ENCODE measurements at regions of chr1 and their contacts with region 1.

Region 1: GRCh38 chr1:52404116-52404986 is at the starts of genes ORC1 and PRPF38A:
- DNase-seq: peak; percentile 99
- ATAC-seq: peak; percentile 92
- H3K4me3 Mint-ChIP-seq: peak within 1 kb of the TSS; percentile 98
- H3K27ac Mint-ChIP-seq: peak within 1 kb of the TSS; percentile 99
- H3K4me1 Mint-ChIP-seq: peaks cover 45% of the 10 kb centered on the region
- H3K27me3 Mint-ChIP-seq: no peaks in the 10 kb centered on the region
- total RNA-seq, gene ORC1: 51.0 to 57.9 TPM
- total RNA-seq, gene PRPF38A: 88.9 to 103 TPM

Region 2: GRCh38 chr1:52033190-52034049 is 370.9 kb before region 1 on chr1 and contains the start of gene KTI12:
- CTCF ChIA-PET with region 1: no interaction called
- POLR2A ChIA-PET with region 1: no interaction called
- intact Hi-C with region 1: loop called in 1 of 2 experiments (anchors 1 kb)
- DNase-seq: peak; percentile 93
- ATAC-seq: peak; percentile 94
- H3K4me3 Mint-ChIP-seq: peak within 1 kb of the TSS; percentile 91
- H3K27ac Mint-ChIP-seq: peak within 1 kb of the TSS; percentile 93
- H3K4me1 Mint-ChIP-seq: peaks cover 32% of the 10 kb centered on the region
- H3K27me3 Mint-ChIP-seq: no peaks in the 10 kb centered on the region
- total RNA-seq, gene KTI12: 7.6 to 12.3 TPM

Region 3: DNA sequence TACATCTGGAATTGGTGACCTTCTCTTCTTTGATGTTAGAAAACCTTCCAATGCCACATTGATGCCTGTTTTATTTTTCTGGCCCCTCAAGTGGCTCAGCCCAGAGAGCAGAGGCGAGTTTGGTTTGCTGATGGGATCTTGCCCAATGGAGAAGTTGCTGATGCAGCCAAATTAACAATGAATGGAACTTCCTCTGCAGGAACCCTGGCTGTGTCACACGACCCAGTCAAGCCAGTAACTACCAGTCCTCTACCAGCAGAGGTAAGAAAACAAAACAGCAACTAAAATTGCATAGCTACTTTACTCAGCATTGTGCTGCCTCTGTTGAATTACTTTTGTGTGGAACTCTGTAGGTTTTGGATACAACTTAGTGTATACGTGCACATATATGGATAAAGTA is 136.0 kb before region 1 on chr1:
- CTCF ChIA-PET with region 1: no interaction called
- POLR2A ChIA-PET with region 1: no interaction called
- intact Hi-C with region 1: no loop called
- DNase-seq: no peak
- ATAC-seq: no peak
- H3K4me3 Mint-ChIP-seq: no peak overlapping the region
- H3K27ac Mint-ChIP-seq: no peak overlapping the region
- H3K4me1 Mint-ChIP-seq: no peaks in the 10 kb centered on the region
- H3K27me3 Mint-ChIP-seq: no peaks in the 10 kb centered on the region

Region 4: GRCh38 chr1:52424231-52424636 is 19.9 kb after region 1 on chr1:
- CTCF ChIA-PET with region 1: interaction called, 9 read pairs
- POLR2A ChIA-PET with region 1: interaction called, 3 read pairs
- intact Hi-C with region 1: loop called in 1 of 2 experiments (anchors 2 kb)
- DNase-seq: peak; percentile 22
- ATAC-seq: peak; percentile 89
- H3K4me3 Mint-ChIP-seq: peak overlapping the region; percentile 47
- H3K27ac Mint-ChIP-seq: peak overlapping the region; percentile 73
- H3K4me1 Mint-ChIP-seq: peaks cover 46% of the 10 kb centered on the region
- H3K27me3 Mint-ChIP-seq: no peaks in the 10 kb centered on the region

Region 5: DNA sequence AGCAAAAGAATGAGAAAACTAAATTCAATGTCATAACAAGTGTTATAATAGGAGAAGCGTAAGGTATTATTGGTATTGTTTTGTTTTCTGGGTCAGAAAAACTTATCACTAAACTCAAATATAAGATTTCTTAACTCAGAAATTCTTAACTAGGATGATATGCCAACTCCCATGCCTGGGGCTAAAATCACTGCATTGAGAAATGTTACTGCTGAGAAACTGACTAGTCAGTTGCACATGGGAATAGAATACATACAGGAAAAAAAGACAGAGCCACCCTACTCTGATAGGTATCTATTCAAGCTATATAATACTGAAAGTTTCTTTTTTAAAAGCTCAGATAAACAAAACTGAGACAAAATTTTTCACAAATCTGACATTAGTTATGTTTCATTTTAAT is 56.3 kb after region 1 on chr1:
- CTCF ChIA-PET with region 1: no interaction called
- POLR2A ChIA-PET with region 1: no interaction called
- intact Hi-C with region 1: no loop called
- DNase-seq: no peak
- ATAC-seq: no peak
- H3K4me3 Mint-ChIP-seq: no peak overlapping the region
- H3K27ac Mint-ChIP-seq: no peak overlapping the region
- H3K4me1 Mint-ChIP-seq: peaks cover 1% of the 10 kb centered on the region
- H3K27me3 Mint-ChIP-seq: no peaks in the 10 kb centered on the region

Region 6: GRCh38 chr1:52636721-52637695 is 232.7 kb after region 1 on chr1:
- CTCF ChIA-PET with region 1: no interaction called
- POLR2A ChIA-PET with region 1: interaction called, 4 read pairs
- intact Hi-C with region 1: loop called (anchors 1 to 2 kb)
- DNase-seq: peak; percentile 84
- ATAC-seq: peak; percentile 62
- H3K4me3 Mint-ChIP-seq: peak overlapping the region; percentile 68
- H3K27ac Mint-ChIP-seq: peak overlapping the region; percentile 97
- H3K4me1 Mint-ChIP-seq: peaks cover 74% of the 10 kb centered on the region
- H3K27me3 Mint-ChIP-seq: no peaks in the 10 kb centered on the region

Region 7: DNA sequence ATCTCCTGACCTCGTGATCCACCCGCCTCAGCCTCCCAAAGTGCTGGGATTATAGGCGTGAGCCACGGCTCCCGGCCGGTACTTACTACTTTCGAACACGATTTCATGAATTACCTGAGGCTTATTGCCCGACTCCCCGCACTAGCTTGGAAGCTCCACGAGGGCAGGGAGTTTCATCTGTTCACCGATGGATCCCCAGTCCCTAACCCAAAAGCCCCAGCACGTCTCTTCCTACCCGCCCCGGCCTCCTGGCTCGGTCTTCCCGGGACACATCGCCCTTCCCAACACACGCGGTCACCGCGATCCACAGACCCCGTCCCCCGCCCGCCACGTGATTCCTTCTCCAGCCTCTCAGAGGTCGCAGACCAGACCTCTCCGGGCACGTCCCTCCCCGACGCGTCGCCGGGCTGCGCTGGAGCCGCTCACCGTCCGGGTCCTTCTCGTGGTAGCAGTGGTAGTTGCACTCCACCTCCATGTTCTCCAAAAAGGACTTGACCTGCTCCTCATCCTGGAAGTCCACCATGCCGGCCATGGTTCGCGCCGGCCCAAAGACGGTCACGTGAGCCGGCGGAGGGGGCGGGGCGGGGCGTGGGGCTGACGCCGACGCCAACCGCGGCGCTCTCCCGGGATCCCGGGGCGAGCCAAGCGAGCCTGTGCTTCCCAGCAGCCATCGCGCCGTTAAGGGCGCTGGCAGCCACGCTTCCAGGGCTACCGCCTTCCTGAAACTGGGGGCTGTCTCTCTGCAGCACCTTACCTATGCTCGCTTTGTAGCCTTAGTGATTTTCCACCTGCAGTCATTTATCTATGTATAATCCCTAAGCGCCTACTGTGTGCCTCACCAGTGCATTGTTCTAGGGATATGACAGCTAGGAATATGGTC is 293.7 kb after region 1 on chr1 and contains the start of gene COA7:
- CTCF ChIA-PET with region 1: no interaction called
- POLR2A ChIA-PET with region 1: interaction called, 8 read pairs
- intact Hi-C with region 1: loop called in 1 of 2 experiments (anchors 1 kb)
- DNase-seq: peak; percentile 83
- ATAC-seq: peak; percentile 50
- H3K4me3 Mint-ChIP-seq: peak within 1 kb of the TSS; percentile 93
- H3K27ac Mint-ChIP-seq: peak within 1 kb of the TSS; percentile 89
- H3K4me1 Mint-ChIP-seq: peaks cover 23% of the 10 kb centered on the region
- H3K27me3 Mint-ChIP-seq: no peaks in the 10 kb centered on the region
- total RNA-seq, gene COA7: 11.0 to 17.2 TPM

Region 8: GRCh38 chr1:53196485-53197270 is 792.3 kb after region 1 on chr1 and contains the start of gene CPT2:
- CTCF ChIA-PET with region 1: no interaction called
- POLR2A ChIA-PET with region 1: no interaction called
- intact Hi-C with region 1: loop called in 1 of 2 experiments (anchors 1 kb)
- DNase-seq: peak; percentile 96
- ATAC-seq: peak; percentile 98
- H3K4me3 Mint-ChIP-seq: peak within 1 kb of the TSS; percentile 98
- H3K27ac Mint-ChIP-seq: peak within 1 kb of the TSS; percentile 99
- H3K4me1 Mint-ChIP-seq: peaks cover 25% of the 10 kb centered on the region
- H3K27me3 Mint-ChIP-seq: no peaks in the 10 kb centered on the region
- total RNA-seq, gene CPT2: 20.7 to 23.7 TPM

Region 9: DNA sequence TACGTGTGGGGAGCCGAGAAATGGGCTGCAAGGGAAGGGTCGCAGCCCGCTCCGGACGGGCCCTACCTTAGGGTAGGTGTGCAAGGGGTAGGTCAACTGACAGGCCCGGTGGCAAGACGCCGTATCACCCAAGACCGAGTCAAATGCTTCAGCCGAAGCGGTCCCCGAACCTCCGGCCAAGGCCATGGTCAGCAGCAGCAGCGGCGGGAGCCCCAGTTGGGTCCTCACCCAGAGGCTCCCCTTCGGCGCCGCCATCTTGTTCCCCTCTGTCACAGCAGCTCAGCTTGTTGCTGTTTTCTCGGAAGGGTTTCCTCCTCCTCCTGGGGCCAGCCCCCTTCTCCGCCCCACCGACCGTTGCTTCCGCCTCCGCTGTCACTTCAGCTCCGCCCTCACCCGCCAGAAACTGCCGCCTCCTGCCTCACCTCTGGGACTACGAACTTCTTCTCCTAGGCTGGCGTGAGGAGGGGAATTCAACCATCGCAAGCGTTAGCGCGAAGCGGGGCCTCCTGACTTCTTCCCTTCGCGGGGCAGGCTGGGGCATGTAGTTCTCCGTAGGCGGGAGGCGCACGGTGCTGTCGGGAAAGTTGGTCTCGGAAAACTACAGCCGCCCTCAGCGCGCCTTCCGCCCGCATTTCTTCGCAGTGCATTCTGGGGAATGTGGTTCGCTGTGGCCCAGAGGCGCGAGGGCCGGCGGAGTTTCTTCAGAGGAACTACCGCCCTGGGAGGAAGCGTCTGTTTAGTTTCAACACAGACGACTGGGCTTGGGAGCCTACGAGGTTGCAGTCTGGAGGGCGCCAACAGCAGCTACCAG is 1648.8 kb after region 1 on chr1 and contains the starts of genes TCEANC2 and TMEM59:
- CTCF ChIA-PET with region 1: no interaction called
- POLR2A ChIA-PET with region 1: no interaction called
- intact Hi-C with region 1: loop called in 1 of 2 experiments (anchors 1 kb)
- DNase-seq: peak; percentile 98
- ATAC-seq: peak; percentile 96
- H3K4me3 Mint-ChIP-seq: no peak within 1 kb of the TSS
- H3K27ac Mint-ChIP-seq: no peak within 1 kb of the TSS
- H3K4me1 Mint-ChIP-seq: peaks cover 33% of the 10 kb centered on the region
- H3K27me3 Mint-ChIP-seq: no peaks in the 10 kb centered on the region
- total RNA-seq, gene TCEANC2: 14.0 to 14.2 TPM
- total RNA-seq, gene TMEM59: 99.3 to 120 TPM

Measured in activated CD4-positive, alpha-beta T cell treated with anti-CD3 and anti-CD28 coated beads for 36 hours (primary cell).